GM12878 (cell line): ENCODE measurements at regions of chr9 and their contacts with region 1.

Region 1: DNA sequence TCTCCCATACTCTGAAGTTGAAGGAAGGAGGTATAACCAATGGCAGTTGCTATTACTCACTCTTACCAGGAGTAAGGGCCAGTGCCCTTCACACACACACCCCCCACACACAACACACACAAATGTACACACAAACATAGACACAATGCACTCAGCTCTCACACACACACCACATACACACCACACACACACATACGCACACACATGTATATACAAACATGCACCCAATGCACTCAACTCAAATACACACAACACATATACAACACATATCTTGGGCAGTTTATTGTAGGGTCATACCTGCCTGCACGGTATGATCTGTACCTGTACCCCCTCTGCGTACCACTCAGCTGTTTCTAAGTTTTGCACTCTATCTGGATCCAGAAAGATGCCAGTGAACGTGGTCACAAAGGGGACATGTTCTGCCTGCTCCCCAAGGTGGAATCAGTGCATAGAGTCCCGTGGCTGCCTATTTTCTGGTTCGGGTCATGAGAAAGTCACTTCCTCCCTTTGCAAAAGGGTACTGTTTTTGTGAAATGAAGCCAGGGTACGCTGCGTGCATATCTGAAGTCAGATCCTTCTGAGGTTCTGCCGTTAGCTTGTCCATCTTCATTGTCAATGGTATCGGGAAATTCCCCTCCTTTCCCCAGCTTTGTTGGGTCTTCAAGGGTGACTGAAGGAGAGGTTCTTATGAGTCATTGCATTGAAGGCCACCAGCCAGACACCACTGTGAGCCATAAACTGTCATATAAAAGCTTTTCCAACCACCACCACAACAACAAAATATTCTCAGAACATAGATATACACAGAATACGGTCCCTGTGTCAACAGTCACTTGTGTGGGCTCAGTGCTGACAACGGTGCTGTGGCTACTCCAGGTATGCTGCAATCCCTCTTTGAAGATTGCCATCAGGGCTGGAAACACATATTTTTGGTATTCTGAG is 131.9 kb downstream of the UGCG start:
- DNase-seq: peak; percentile 98
- ATAC-seq: peak; percentile 63
- H3K4me3 ChIP-seq: peak overlapping the region; percentile 63
- H3K27ac ChIP-seq: peak overlapping the region; percentile 97
- H3K4me1 ChIP-seq: peaks cover 38% of the 10 kb centered on the region
- H3K27me3 ChIP-seq: no peaks in the 10 kb centered on the region
- CTCF ChIP-seq: no peak
- EP300 ChIP-seq: peak; percentile 98 to 99
- POLR2A ChIP-seq: peak; percentile 84
- RAD21 ChIP-seq: peak; percentile 41

Region 2: GRCh38 chr9:111878946-111879345 is 149.6 kb before region 1 on chr9:
- CTCF ChIA-PET with region 1: no interaction called
- POLR2A ChIA-PET with region 1: no interaction called
- RAD21 ChIA-PET with region 1: no interaction called
- SMC1A ChIA-PET with region 1: no interaction called
- in situ Hi-C with region 1: no loop called
- intact Hi-C with region 1: no loop called
- DNase-seq: no peak
- ATAC-seq: no peak
- H3K4me3 ChIP-seq: no peak overlapping the region
- H3K27ac ChIP-seq: no peak overlapping the region
- H3K4me1 ChIP-seq: no peaks in the 10 kb centered on the region
- H3K27me3 ChIP-seq: no peaks in the 10 kb centered on the region
- CTCF ChIP-seq: no peak
- EP300 ChIP-seq: no peak
- POLR2A ChIP-seq: no peak
- RAD21 ChIP-seq: no peak

Region 3: DNA sequence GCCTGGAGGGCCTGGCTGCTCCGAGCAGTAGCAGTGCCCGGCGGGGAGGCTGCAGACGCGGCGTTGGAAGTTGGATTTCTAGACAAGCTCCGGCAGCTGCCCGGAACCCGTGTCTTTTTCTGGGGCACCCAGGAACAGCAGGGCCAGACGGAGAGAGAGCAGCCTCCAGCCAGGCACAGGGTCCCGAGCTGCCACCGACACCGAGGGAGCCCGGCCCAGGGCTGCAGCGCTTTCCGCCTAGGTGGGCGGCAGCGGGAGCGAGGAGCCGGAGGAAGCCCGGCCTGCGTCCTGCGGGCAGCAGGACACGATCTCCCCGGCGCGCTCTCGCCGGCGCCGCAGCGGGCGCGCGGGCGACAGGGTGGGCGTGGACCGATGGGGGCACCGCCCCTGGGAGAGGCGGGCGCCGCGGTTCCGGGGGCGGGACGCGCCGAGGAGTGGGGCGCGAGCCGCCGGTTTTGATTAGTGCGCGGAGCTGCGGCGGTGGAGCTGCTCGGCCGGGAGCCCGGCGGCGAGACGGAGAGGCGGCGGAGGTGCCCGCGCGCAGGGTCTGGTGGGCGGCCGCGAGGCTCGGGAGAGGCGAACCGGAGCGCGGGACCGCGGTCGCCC is 132.1 kb before region 1 on chr9 and contains the start of gene UGCG:
- CTCF ChIA-PET with region 1: interaction called, 4 read pairs
- POLR2A ChIA-PET with region 1: interaction called, 7 read pairs
- RAD21 ChIA-PET with region 1: interaction called, 26 read pairs
- SMC1A ChIA-PET with region 1: interaction called, 11 read pairs
- in situ Hi-C with region 1: no loop called
- intact Hi-C with region 1: loop called (anchors 2 kb)
- DNase-seq: no peak
- ATAC-seq: peak; percentile 79
- H3K4me3 ChIP-seq: peak within 1 kb of the TSS; percentile 80
- H3K27ac ChIP-seq: peak within 1 kb of the TSS; percentile 93
- H3K4me1 ChIP-seq: no peaks in the 10 kb centered on the region; the same call in 1 of the 2 replicates
- H3K27me3 ChIP-seq: no peaks in the 10 kb centered on the region
- CTCF ChIP-seq: no peak
- EP300 ChIP-seq: 0 out of 4 replicates have a peak, but pooled peaks of 1 of the 2 experiments have one; percentile 14
- POLR2A ChIP-seq: peak; percentile 93
- RAD21 ChIP-seq: 0 out of 2 replicates have a peak, but pooled peaks have one; percentile 2
- polyA plus RNA-seq, gene UGCG: 48.0 to 62.1 TPM

Region 4: DNA sequence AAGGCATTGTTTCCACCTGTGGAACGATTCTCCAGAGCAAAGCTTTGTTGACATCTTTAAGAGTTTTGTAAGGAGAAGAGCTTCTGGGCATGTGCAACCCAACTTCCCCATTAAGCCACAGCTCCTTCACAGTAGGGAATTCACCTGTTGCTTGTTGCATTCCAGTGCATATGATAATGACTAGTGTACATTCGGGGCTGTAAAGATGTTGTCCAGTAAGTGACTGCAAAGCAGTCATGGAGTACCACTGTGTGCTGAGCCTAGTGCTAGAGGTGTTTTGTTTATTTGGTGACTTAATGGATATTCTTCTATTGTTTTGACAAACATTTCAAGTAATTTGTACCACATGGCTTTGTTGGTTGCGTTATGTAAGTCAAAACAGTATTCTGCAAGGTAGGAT is 119.1 kb before region 1 on chr9:
- CTCF ChIA-PET with region 1: interaction called, 4 read pairs
- POLR2A ChIA-PET with region 1: interaction called, 5 read pairs
- RAD21 ChIA-PET with region 1: interaction called, 23 read pairs
- SMC1A ChIA-PET with region 1: interaction called, 11 read pairs
- in situ Hi-C with region 1: no loop called
- intact Hi-C with region 1: no loop called
- DNase-seq: no peak
- ATAC-seq: peak; percentile 65
- H3K4me3 ChIP-seq: peak overlapping the region; percentile 36; the same call in 1 of the 2 replicates
- H3K27ac ChIP-seq: peak overlapping the region; percentile 70; the same call in 1 of the 2 replicates
- H3K4me1 ChIP-seq: peaks cover 62% of the 10 kb centered on the region
- H3K27me3 ChIP-seq: no peaks in the 10 kb centered on the region
- CTCF ChIP-seq: no peak
- EP300 ChIP-seq: no peak
- POLR2A ChIP-seq: no peak
- RAD21 ChIP-seq: no peak

Region 5: DNA sequence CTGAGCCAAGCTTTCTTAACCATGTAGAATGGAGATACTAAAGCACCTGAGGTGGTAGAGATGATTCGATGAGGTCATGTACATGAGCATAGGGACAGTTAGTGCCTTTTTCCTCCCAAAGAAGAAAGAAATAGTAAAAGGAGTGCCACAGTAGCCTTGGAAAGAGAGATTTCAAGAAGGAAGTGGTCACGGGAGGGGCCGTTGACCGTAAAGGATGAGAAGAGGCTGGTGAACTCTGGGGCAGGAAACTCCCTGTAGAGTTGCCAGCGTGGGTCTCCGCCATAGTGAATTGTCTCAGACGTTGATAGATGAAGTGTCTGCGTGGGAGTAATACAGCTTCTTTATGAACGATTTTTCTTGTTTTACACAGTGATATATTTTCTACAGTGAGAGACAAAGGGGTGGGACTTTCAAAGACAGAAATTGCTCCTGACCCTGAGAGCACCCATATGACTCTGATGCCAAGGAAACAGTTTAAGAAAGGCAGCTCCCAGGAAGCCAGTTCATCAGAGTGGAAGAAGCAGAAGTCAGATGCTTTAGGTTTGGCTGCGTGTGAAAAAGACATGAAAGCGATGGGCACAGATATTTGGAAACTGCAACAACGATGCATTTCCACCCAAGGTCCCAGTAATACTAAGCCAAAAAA is 90.6 kb before region 1 on chr9:
- CTCF ChIA-PET with region 1: no interaction called
- POLR2A ChIA-PET with region 1: interaction called, 6 read pairs
- RAD21 ChIA-PET with region 1: interaction called, 6 read pairs
- SMC1A ChIA-PET with region 1: interaction called, 12 read pairs
- in situ Hi-C with region 1: no loop called
- intact Hi-C with region 1: no loop called
- DNase-seq: peak; percentile 74
- ATAC-seq: peak; percentile 90
- H3K4me3 ChIP-seq: no peak overlapping the region
- H3K27ac ChIP-seq: peak overlapping the region; percentile 80
- H3K4me1 ChIP-seq: peaks cover 21% of the 10 kb centered on the region
- H3K27me3 ChIP-seq: no peaks in the 10 kb centered on the region
- CTCF ChIP-seq: no peak
- EP300 ChIP-seq: peak; percentile 68 to 77; a peak in 2 of 4 replicates
- POLR2A ChIP-seq: no peak; the same call in none of the 2 replicates
- RAD21 ChIP-seq: no peak

Region 6: DNA sequence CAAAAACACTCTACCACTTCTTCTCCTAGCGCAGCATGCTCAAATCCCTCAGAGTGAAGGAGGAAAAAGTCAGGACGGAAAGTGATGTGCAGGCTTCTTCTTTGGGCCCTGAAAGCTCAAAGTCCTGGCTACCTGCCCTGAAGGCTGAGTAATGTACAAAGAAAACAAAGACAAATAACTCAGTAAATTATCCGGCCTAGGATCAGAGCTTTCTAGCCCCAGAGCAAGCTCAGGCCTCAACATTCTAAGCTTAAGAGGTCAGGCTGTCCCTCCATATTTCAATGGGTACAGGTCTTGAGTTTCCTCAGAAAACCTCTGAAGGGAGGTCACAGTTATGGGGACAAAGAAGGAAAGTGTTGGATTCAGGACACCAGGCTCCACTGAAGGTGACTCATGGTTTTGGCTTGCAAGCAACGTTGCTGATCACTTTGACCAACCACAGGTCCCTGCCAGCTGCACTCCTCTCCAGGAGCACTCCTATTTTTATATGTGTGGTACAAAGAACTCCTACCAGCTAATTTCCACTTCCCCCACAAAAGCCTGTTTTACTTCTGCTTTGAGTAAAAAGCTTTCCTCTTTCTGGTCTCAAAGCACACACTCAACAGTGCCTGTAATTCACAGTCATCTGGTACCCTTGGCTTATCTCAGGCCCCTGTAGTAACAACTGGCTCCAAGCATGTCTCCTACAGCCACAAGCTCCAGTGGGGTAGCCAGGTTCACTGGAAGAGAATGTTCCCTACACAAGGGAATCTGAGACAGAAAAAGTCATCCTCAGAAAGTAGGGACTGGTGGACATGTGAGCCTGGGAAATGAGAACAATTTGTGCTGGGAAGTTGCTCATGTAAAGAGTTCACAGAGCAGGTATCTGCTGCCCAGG is 16.3 kb before region 1 on chr9:
- CTCF ChIA-PET with region 1: interaction called, 16 read pairs
- POLR2A ChIA-PET with region 1: interaction called, 124 read pairs
- RAD21 ChIA-PET with region 1: interaction called, 72 read pairs
- SMC1A ChIA-PET with region 1: interaction called, 269 read pairs
- in situ Hi-C with region 1: no loop called
- intact Hi-C with region 1: loop called (anchors 2 kb)
- DNase-seq: peak; percentile 96
- ATAC-seq: peak; percentile 92
- H3K4me3 ChIP-seq: no peak overlapping the region
- H3K27ac ChIP-seq: peak overlapping the region; percentile 92
- H3K4me1 ChIP-seq: peaks cover 52% of the 10 kb centered on the region
- H3K27me3 ChIP-seq: no peaks in the 10 kb centered on the region
- CTCF ChIP-seq: no peak
- EP300 ChIP-seq: peak; percentile 96 to 97
- POLR2A ChIP-seq: peak; percentile 43; the same call in 1 of the 2 replicates
- RAD21 ChIP-seq: peak; percentile 35